Ovary (tissue), 10 donors: ENCODE measurements at regions of chr4 and their contacts with region 1.

Region 1: GRCh38 chr4:139295206-139295941 is 5.9 kb upstream of the NAA15 start:
- DNase-seq: peak; percentile 97 to 100 (median 99)
- H3K4me3 ChIP-seq: peak overlapping the region; percentile 83
- H3K27ac ChIP-seq: peak overlapping the region; percentile 79 to 87
- H3K4me1 ChIP-seq: peaks cover 1% of the 10 kb centered on the region
- H3K27me3 ChIP-seq: no peaks in the 10 kb centered on the region
- CTCF ChIP-seq: peak; percentile 94 to 99 (median 95)
- EP300 ChIP-seq: no peak
- POLR2A ChIP-seq: peak; percentile 52

Region 2: GRCh38 chr4:138828926-138829325 is 466.4 kb before region 1 on chr4:
- intact Hi-C with region 1: no loop called
- DNase-seq: no peak
- H3K4me3 ChIP-seq: no peak overlapping the region
- H3K27ac ChIP-seq: no peak overlapping the region
- H3K4me1 ChIP-seq: no peaks in the 10 kb centered on the region
- H3K27me3 ChIP-seq: no peaks in the 10 kb centered on the region
- CTCF ChIP-seq: no peak
- EP300 ChIP-seq: no peak
- POLR2A ChIP-seq: no peak

Region 3: DNA sequence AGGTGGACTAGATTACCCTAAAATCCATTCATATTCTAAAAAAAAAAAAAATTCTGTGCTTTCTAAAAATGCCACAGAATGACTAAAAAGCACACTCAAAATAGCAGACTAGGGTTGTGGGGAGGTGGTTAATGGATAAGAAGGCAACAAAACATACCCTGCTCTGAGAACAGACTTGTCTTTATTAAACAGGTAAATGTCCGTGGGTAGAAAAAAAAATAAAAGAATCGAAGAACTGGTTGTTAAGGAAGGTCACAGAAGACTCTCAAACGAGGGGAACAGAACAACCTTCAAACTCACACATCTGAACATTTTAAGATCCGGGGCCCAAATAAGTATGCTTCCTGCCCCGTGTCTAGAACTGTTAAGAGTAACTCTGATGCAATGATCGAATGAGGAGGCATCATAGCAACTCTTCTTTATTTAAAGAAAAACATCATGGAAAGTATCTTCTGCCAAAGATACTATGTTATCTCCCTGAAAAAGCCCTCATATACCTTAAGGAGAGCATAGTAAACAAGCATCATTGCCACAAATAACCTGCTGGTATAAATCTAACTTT is 186.7 kb before region 1 on chr4:
- intact Hi-C with region 1: loop called in 1 of 4 experiments (anchors 10 kb)
- DNase-seq: no peak
- H3K4me3 ChIP-seq: no peak overlapping the region
- H3K27ac ChIP-seq: no peak overlapping the region
- H3K4me1 ChIP-seq: no peaks in the 10 kb centered on the region
- H3K27me3 ChIP-seq: no peaks in the 10 kb centered on the region
- CTCF ChIP-seq: no peak
- EP300 ChIP-seq: no peak
- POLR2A ChIP-seq: no peak

Region 4: DNA sequence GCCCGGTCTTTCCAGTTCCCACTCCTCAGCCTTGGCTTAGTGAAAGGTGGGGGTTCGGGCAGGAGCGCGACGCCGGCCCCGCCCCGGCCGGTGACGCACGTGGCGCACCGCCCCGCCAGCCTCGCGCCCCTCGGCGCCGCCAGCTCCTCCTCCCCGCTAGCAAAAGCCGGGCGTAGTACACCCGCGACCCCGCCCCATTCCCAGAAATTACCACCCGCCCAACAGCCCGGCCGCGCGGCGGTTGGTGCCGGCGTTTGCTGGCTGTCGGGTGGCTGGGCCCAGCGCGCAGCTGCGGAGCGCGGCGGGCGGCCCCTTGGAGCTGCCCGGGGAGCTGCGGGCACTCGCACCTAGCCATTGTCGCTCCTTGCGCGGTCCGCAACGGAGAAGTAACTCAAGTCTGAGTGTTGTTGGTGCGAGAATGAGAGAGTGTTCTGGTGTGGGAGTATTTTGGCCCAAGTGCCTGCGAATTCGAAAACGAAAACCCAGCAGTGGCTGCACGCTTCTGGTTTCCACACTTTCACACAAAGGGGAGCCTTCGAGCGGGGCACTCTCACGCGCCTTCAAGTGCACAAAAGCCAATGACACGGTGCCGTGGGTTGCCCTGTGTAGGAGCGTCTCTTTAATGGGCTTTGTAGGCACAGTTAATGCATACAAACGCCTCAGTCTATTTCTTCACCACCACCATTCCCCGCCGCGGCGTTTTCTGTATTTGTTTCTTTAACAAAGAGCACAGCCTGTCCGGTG is 117.3 kb before region 1 on chr4:
- intact Hi-C with region 1: loop called in 2 of 4 experiments (anchors 5 to 10 kb)
- DNase-seq: peak; percentile 91 to 95 (median 94)
- H3K4me3 ChIP-seq: peak overlapping the region; percentile 82
- H3K27ac ChIP-seq: peak overlapping the region; percentile 99 to 100
- H3K4me1 ChIP-seq: no peaks in the 10 kb centered on the region
- H3K27me3 ChIP-seq: no peaks in the 10 kb centered on the region
- CTCF ChIP-seq: no peak
- EP300 ChIP-seq: peak; percentile 84
- POLR2A ChIP-seq: peak; percentile 75

Region 5: GRCh38 chr4:139229534-139230039 is 65.8 kb before region 1 on chr4:
- intact Hi-C with region 1: loop called in 1 of 4 experiments (anchors 5 kb)
- DNase-seq: no peak
- H3K4me3 ChIP-seq: no peak overlapping the region
- H3K27ac ChIP-seq: no peak overlapping the region
- H3K4me1 ChIP-seq: no peaks in the 10 kb centered on the region
- H3K27me3 ChIP-seq: no peaks in the 10 kb centered on the region
- CTCF ChIP-seq: peak; percentile 39 to 79 (median 77)
- EP300 ChIP-seq: no peak
- POLR2A ChIP-seq: no peak

Region 6: GRCh38 chr4:139243448-139244365 is 51.7 kb before region 1 on chr4:
- intact Hi-C with region 1: loop called in 1 of 4 experiments (anchors 10 kb)
- DNase-seq: peak in 2 of 5 donors; percentile 17 to 33
- H3K4me3 ChIP-seq: no peak overlapping the region
- H3K27ac ChIP-seq: no peak overlapping the region
- H3K4me1 ChIP-seq: peaks cover 2% of the 10 kb centered on the region
- H3K27me3 ChIP-seq: no peaks in the 10 kb centered on the region
- CTCF ChIP-seq: no peak
- EP300 ChIP-seq: no peak
- POLR2A ChIP-seq: no peak

Region 7: GRCh38 chr4:139484783-139485318 is 189.5 kb after region 1 on chr4:
- intact Hi-C with region 1: no loop called
- DNase-seq: no peak
- H3K4me3 ChIP-seq: no peak overlapping the region
- H3K27ac ChIP-seq: no peak overlapping the region
- H3K4me1 ChIP-seq: no peaks in the 10 kb centered on the region
- H3K27me3 ChIP-seq: no peaks in the 10 kb centered on the region
- CTCF ChIP-seq: no peak
- EP300 ChIP-seq: no peak
- POLR2A ChIP-seq: no peak

Region 8: DNA sequence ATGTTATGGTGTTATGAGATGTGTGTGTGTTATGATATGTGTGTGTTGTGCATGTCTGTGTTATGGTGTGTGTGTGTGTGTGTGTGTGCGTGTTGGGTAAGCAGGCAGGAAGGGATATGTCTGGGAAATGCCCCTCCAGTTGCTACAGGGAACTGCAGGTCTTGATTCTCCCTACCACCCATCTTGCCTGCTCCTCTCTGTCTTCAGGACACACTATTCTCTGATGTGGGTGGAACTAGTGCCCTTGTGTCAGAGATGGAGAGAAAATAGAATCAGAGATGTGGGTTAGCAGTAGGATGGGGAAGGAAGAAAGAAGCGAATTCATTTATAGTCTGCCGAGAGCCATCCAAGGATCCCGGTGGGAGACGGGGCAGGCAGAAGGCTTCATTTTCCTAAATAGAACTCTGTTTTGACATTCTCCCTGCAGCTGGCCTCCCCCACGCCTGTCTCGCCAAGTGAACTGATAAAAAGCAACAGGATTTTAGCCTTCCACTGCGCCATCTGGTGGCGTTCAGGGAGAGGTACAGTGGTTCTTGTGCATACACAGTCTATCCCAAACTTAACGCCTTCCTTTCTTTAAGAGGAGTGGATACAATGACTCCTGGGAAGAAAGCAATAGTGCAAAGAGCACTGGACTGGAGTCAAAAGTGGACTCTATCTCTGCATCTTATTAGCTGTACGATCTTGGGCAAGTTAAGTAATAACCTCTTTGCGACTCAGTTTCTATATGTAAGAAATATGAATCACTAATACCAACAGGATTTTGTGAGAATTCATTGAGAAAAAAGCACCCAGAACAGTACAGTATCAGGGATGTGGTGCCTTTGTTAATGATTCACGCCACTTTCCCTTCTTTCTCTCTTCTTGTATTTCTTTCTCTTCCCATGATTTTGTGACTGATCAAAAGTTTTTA is 356.2 kb after region 1 on chr4:
- intact Hi-C with region 1: no loop called
- DNase-seq: peak; percentile 92 to 94 (median 94)
- H3K4me3 ChIP-seq: no peak overlapping the region
- H3K27ac ChIP-seq: no peak overlapping the region
- H3K4me1 ChIP-seq: peaks cover 3% of the 10 kb centered on the region
- H3K27me3 ChIP-seq: no peaks in the 10 kb centered on the region
- CTCF ChIP-seq: peak; percentile 71 to 89 (median 84)
- EP300 ChIP-seq: no peak
- POLR2A ChIP-seq: no peak